Mucosa of descending colon (tissue), 3 donors: ENCODE measurements at regions of chr10 and their contacts with region 1.

Region 1: DNA sequence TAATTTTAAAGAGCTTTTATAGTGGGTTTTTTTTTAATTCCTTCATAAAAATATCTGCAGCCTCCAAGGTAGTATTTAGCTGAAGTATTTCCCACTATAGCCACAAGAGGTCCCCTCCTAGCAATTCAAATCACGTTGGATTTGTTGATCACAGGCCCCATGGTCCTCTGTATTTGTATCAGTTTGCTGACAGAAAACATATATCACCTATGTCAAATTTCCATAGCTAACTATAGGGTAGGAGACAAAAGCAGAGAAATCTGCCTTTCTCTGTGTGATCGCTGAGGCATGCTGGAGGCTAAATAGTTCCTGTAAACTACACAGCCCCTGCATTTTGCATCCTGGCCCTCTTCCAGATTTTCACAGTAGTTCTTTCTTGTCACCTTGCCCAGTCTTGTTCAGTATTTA is 1.7 kb upstream of the CTNNA3 start:
- DNase-seq: peak in 1 of 3 donors; percentile 39
- ATAC-seq: peak; percentile 70
- H3K4me3 ChIP-seq: no peak overlapping the region
- H3K4me1 ChIP-seq: no peaks in the 10 kb centered on the region
- CTCF ChIP-seq: peak; percentile 42

Region 2: DNA sequence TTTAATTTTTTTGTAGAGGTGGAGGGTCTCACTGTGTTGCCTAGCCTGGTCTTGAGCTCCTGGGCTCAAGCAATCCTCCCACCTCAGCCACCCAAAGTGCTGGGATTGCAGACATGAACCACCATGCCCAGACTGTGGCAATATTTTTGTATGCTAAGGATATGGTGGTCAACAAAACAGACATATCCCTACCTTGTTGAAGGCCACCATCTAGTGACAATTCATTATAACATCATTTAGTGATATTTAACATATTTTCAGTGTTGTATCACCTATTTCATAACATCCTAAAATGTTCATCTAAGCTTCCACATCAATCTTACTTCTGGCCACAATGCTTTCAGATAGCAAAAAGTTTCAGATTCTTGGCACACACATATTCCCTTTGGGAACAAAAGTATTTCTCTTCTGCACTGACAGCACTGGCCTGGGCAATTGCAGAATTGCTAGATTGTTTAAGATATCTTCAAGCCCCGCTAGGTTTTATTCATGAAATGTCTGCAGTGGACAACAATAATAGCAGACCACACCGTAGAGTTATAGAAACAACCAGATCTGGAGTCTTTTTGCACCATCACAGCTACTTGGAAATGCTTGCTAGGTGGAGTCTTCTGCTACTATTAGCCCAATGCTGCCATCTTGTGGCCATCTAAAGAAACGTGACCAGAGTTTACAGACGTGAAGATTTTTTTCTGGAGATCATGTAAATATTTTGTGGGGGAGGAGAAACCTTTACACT is 81.9 kb after region 1 on chr10:
- intact Hi-C with region 1: loop called (anchors 5 to 10 kb)
- DNase-seq: peak in 1 of 3 donors; percentile 81
- ATAC-seq: peak; percentile 77
- H3K4me3 ChIP-seq: no peak overlapping the region
- H3K4me1 ChIP-seq: peaks cover 2% of the 10 kb centered on the region
- CTCF ChIP-seq: peak; percentile 41